Esophagus muscularis mucosa (tissue), 4 donors: ENCODE measurements at regions of chr13 and their contacts with region 1.

Region 1: GRCh38 chr13:31742097-31742734 is 2.9 kb downstream of the RXFP2 start:
- DNase-seq: no peak
- H3K4me3 ChIP-seq: no peak overlapping the region
- H3K27ac ChIP-seq: no peak overlapping the region
- H3K4me1 ChIP-seq: peaks cover 0 to 4% (median 0%) of the 10 kb centered on the region in 4 donors
- H3K27me3 ChIP-seq: no peaks in the 10 kb centered on the region
- CTCF ChIP-seq: peak in 2 of 3 experiments; percentile 82 to 94
- EP300 ChIP-seq: no peak
- POLR2A ChIP-seq: no peak

Region 2: GRCh38 chr13:30529085-30529834 is 1213.0 kb before region 1 on chr13:
- intact Hi-C with region 1: no loop called
- DNase-seq: no peak
- H3K4me3 ChIP-seq: no peak overlapping the region
- H3K27ac ChIP-seq: no peak overlapping the region
- H3K4me1 ChIP-seq: no peaks in the 10 kb centered on the region
- H3K27me3 ChIP-seq: no peaks in the 10 kb centered on the region
- CTCF ChIP-seq: no peak
- EP300 ChIP-seq: no peak
- POLR2A ChIP-seq: no peak

Region 3: GRCh38 chr13:31236211-31236786 is 505.9 kb before region 1 on chr13:
- intact Hi-C with region 1: loop called (anchors 10 kb)
- DNase-seq: no peak
- H3K4me3 ChIP-seq: no peak overlapping the region
- H3K27ac ChIP-seq: no peak overlapping the region
- H3K4me1 ChIP-seq: no peaks in the 10 kb centered on the region
- H3K27me3 ChIP-seq: no peaks in the 10 kb centered on the region
- CTCF ChIP-seq: peak; percentile 40 to 67 (median 45)
- EP300 ChIP-seq: no peak
- POLR2A ChIP-seq: no peak

Region 4: DNA sequence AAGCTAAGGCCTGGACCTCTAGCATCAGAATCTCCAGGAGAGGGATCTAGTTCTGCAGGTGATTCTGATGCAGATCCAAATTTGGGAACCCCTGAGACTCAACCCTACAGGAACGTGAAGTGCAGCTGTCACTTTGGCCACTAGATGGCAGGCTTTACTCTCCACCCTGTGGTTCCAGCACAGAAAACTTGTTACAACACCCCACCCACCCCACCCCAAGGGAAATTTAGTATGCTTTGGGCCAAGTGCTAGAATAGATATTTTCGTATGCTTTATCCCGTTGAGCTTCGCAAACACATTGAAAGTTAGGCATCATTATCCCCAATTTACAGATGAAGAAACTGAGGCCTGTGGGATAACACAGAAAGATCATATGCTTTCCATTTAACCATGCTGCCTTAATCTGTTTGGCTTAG is 310.5 kb before region 1 on chr13:
- intact Hi-C with region 1: loop called (anchors 2 kb)
- DNase-seq: no peak
- H3K4me3 ChIP-seq: no peak overlapping the region
- H3K27ac ChIP-seq: no peak overlapping the region
- H3K4me1 ChIP-seq: no peaks in the 10 kb centered on the region
- H3K27me3 ChIP-seq: no peaks in the 10 kb centered on the region
- CTCF ChIP-seq: peak; percentile 46 to 87 (median 80)
- EP300 ChIP-seq: no peak
- POLR2A ChIP-seq: no peak

Region 5: DNA sequence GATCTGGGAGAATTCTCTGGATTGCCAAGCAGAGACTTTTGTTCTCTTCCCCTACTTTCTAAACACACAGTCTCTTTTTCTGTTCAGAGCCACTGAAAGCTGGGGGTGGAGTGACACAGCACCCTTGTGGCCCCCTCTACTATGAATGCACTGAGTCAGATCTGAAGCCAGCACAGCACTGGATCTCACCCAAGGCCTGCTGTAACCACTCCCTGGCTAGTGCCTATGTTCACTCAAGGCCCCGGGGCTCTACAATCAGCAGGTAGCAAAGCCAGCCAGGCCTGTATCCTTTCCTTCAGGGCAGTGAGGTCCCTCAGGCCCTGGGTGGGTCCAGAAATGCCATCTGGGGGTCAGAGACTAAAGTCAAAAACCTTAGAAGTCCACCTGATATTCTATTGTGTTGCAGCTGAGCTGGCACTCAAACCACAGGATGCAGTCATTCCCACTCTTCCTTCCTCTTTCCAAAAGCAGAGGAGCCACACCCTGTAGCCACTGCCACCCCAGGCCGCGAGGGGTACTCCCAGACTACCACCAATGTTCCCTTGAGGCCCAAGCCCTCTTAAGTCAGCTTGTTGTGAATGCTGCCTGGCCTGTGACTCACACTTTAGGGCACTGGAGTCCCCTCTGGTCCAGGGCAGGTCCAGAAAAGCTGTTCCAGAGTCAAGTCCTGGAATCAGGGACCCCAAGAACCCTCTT is 113.0 kb before region 1 on chr13:
- intact Hi-C with region 1: no loop called
- DNase-seq: no peak
- H3K4me3 ChIP-seq: no peak overlapping the region
- H3K27ac ChIP-seq: no peak overlapping the region
- H3K4me1 ChIP-seq: no peaks in the 10 kb centered on the region
- H3K27me3 ChIP-seq: no peaks in the 10 kb centered on the region
- CTCF ChIP-seq: no peak
- EP300 ChIP-seq: no peak
- POLR2A ChIP-seq: no peak

Region 6: DNA sequence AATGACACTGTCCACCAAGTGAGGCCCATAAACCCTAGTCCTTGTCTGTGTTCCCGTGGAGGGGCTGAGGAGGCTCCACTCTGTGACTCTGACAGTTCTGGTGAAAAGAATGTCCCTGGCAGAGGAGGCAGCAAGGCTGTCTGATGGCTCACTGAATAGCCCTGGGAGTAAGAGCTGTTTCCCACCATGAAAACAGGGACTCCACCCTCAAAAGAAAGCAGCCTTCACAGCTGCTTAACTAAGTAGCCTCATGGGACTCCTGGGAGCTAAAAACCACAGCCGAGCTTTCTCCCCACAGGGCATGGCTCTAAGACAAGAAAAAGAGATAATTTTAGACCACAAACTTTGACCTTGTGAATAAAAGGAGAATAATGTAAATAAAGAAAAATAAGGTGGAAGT is 154.2 kb after region 1 on chr13:
- intact Hi-C with region 1: no loop called
- DNase-seq: no peak
- H3K4me3 ChIP-seq: no peak overlapping the region
- H3K27ac ChIP-seq: peak overlapping the region in 2 of 4 donors; percentile 10 to 13
- H3K4me1 ChIP-seq: peaks cover 7 to 59% (median 14%) of the 10 kb centered on the region in 4 donors
- H3K27me3 ChIP-seq: no peaks in the 10 kb centered on the region
- CTCF ChIP-seq: no peak
- EP300 ChIP-seq: no peak
- POLR2A ChIP-seq: no peak